Vagina (tissue), 2 donors: ENCODE measurements at regions of chr4 and their contacts with region 1.

Region 1: DNA sequence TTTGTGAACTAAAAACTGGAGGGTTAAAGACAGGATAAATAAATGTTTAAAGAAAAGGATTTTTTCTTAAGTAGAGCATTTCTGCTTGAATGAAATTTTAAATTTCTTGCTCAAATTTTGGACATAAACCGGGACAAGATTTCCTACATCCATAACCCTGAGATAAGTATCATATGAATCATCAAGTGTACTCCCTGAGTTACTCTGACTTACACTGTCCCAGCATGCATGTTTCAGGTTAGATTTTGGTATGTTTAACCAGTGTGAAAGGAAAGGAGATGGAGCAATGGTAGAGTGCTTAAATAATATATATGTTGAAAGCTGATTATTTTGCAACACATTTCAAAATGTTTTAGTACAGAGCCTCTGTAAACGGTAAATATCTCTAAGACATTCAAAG is 175.2 kb downstream of the ADGRL3 start:
- DNase-seq: no peak
- H3K4me3 ChIP-seq: no peak overlapping the region
- H3K27ac ChIP-seq: no peak overlapping the region
- H3K4me1 ChIP-seq: no peaks in the 10 kb centered on the region
- H3K27me3 ChIP-seq: no peaks in the 10 kb centered on the region
- CTCF ChIP-seq: no peak
- POLR2A ChIP-seq: no peak

Region 2: GRCh38 chr4:59374416-59374815 is 2000.9 kb before region 1 on chr4:
- intact Hi-C with region 1: loop called (anchors 5 kb)
- DNase-seq: no peak
- H3K4me3 ChIP-seq: no peak overlapping the region
- H3K27ac ChIP-seq: no peak overlapping the region
- H3K4me1 ChIP-seq: no peaks in the 10 kb centered on the region
- H3K27me3 ChIP-seq: no peaks in the 10 kb centered on the region
- CTCF ChIP-seq: no peak
- POLR2A ChIP-seq: no peak